ENCODE measurements at regions of chr9 and their contacts with region 1.

Region 1: DNA sequence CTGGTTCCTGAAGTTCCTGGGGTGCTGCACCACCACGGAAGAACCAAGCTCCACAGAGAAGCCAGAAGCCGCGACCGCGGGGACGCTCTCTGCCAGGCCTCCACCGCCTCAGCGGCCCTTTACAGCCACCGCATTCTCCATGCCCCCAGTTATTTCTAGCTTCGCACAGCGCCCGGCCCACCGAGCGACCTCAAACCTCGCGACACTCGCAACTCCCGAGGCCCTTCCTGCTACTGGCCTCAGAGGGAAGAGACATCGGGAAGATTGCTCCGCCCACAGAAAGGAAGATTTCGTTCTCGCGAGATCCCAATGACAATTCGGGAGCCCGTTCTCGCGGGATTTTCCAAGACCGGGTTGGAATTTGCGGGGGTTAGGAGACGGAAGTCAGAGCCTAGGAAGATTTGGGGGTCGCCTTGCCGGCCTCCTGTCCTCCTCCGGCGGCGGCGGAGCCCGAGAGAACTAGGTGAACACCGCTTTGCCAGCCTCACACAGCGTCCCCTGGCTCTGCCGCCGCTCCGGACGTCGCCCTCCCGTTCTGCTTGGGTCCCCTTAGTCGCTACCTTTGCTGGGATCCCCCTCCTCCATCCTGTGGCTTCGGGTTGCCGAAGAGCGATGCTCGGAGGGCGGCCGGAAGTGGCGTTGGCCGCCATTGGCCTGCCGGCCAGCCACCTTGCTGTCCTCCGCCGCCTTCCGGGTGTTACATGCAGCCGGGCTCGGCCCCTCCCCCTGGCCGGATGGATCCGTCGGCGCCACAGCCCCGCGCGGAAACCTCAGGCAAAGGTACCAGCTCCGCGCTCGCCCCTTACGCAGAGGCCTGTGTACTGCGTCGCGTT is at the start of gene ERCC6L2:
- DNase-seq: peak; percentile 95 to 97 (median 96)
- ATAC-seq: peak; percentile 97 to 98 (median 97)
- H3K4me3 ChIP-seq: peak within 1 kb of the TSS in 2 of 12 donors; percentile 62 to 78
- H3K27ac ChIP-seq: peak within 1 kb of the TSS in 4 of 12 donors; percentile 98 to 100 (median 99)
- H3K4me1 ChIP-seq: peaks cover 0 to 27% (median 20%) of the 10 kb centered on the region in 12 donors
- H3K27me3 ChIP-seq: no peaks in the 10 kb centered on the region
- CTCF ChIP-seq: peak in 3 of 12 donors; percentile 6 to 16 (median 15)
- POLR2A ChIP-seq: peak in 1 of 2 donors; percentile 68
- total RNA-seq, gene ERCC6L2: 21.3 to 46.8 (median 27.6) TPM

Region 2: GRCh38 chr9:95317119-95317892 is 558.2 kb before region 1 on chr9 and contains the start of gene FANCC:
- intact Hi-C with region 1: loop called in 1 of 10 experiments (anchors 10 kb)
- DNase-seq: peak; percentile 94 to 96 (median 95)
- ATAC-seq: peak; percentile 95 to 98 (median 97)
- H3K4me3 ChIP-seq: peak within 1 kb of the TSS; percentile 68 to 100 (median 85)
- H3K27ac ChIP-seq: peak within 1 kb of the TSS; percentile 61 to 100 (median 94)
- H3K4me1 ChIP-seq: peaks cover 0 to 15% (median 5%) of the 10 kb centered on the region in 12 donors
- H3K27me3 ChIP-seq: no peaks in the 10 kb centered on the region
- CTCF ChIP-seq: peak in 2 of 12 donors; percentile 1 to 11
- POLR2A ChIP-seq: peak in 1 of 2 donors; percentile 43
- total RNA-seq, gene FANCC: 2.9 to 6.2 (median 4.2) TPM

Region 3: DNA sequence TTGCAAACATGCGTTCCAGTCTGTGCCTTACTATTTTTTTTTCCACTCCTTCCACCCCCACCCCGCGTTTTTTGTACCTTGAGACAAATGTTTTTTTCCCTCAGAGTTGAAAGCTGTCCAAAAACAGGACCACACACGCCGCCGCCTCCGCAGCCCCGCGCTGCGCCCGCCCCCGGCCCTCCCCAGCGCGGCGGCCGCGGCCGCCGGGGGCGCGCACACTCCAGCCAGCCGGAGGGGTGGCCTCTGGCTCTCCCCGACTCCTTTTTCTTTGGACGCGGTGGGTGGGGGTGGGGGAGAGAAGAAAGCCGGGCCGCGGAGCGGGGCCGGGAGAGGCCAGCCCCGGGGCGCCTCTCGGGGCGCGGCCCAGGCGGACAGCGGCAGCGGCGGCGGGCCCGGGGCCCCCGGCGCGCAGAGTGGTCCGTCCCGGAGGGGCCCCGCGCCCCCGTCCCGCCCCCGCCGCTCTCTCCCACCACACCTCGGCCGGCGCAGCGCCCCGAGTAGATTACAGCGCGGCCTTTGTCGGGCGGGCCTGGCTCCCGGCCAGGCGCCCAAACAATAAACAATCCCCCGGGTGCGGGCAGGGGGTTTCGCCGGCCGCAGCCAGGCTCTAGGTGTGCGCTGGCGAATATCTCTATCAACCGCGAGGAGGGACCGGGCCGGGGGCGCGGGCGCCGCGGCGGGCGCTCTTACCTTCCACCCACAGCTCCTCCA is 369.6 kb before region 1 on chr9:
- intact Hi-C with region 1: loop called (anchors 2 to 10 kb)
- DNase-seq: peak; percentile 56 to 78 (median 65)
- ATAC-seq: peak in 2 of 4 donors; percentile 17 to 19
- H3K4me3 ChIP-seq: peak overlapping the region; percentile 66 to 96 (median 76)
- H3K27ac ChIP-seq: peak overlapping the region; percentile 88 to 99 (median 92)
- H3K4me1 ChIP-seq: peaks cover 0 to 45% (median 17%) of the 10 kb centered on the region in 12 donors
- H3K27me3 ChIP-seq: peaks cover 0 to 42% (median 0%) of the 10 kb centered on the region in 9 donors
- CTCF ChIP-seq: no peak
- POLR2A ChIP-seq: peak in 1 of 2 donors; percentile 40

Region 4: GRCh38 chr9:95666096-95666784 is 209.3 kb before region 1 on chr9:
- intact Hi-C with region 1: no loop called
- DNase-seq: no peak
- ATAC-seq: no peak
- H3K4me3 ChIP-seq: no peak overlapping the region
- H3K27ac ChIP-seq: no peak overlapping the region
- H3K4me1 ChIP-seq: no peaks in the 10 kb centered on the region
- H3K27me3 ChIP-seq: peaks cover 0 to 17% (median 5%) of the 10 kb centered on the region in 9 donors
- CTCF ChIP-seq: no peak
- POLR2A ChIP-seq: no peak

Measured in heart left ventricle (tissue), 16 donors.